ENCODE measurements at regions of chr9 and their contacts with region 1.

Region 1: GRCh38 chr9:125558453-125559092 is 148.4 kb downstream of the MAPKAP1 start:
- DNase-seq: peak; percentile 33
- ATAC-seq: peak; percentile 79
- H3K4me3 ChIP-seq: no peak overlapping the region
- H3K27ac ChIP-seq: no peak overlapping the region; the same call in 1 of the 2 replicates
- H3K4me1 ChIP-seq: peaks cover 28% of the 10 kb centered on the region
- H3K27me3 ChIP-seq: no peaks in the 10 kb centered on the region
- CTCF ChIP-seq: peak; percentile 79 to 90 (median 86)
- EP300 ChIP-seq: no peak
- POLR2A ChIP-seq: no peak
- RAD21 ChIP-seq: peak; percentile 91

Region 2: DNA sequence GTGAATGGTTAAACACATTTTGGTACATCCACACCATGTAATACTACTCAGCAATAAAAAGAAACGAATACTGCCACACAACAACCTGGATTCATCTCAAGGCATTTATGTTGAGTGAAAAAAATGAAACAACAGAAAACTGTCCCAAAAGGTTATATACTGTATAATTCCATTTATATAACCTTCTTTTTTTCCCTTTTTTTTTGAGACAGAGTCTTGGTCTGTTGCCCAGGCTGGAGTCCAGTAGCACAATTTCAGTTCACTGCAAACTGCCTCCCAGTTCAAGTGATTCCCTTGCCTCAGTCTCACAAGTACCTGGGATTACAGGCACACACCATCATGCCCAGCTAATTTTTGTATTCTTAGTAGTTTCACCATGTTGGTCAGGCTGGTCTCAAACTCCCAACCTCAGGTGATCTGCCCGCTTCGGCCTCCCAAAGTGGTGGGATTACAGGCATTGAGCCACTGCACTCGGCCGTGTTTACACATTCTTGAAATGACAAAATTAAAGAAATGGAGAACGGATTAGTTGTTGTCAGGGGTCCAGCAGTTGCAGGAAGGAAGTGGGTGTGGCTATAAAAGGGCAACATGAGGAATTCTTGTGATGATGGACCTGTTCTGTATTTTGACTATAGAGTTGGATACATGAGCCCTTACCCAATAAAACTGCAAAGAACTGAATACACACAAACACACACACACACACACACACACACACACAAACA is 386.4 kb before region 1 on chr9:
- CTCF ChIA-PET with region 1: no interaction called
- POLR2A ChIA-PET with region 1: no interaction called
- RAD21 ChIA-PET with region 1: no interaction called
- SMC1A ChIA-PET with region 1: no interaction called
- in situ Hi-C with region 1: no loop called
- intact Hi-C with region 1: no loop called
- DNase-seq: no peak
- ATAC-seq: no peak
- H3K4me3 ChIP-seq: no peak overlapping the region
- H3K27ac ChIP-seq: no peak overlapping the region
- H3K4me1 ChIP-seq: no peaks in the 10 kb centered on the region
- H3K27me3 ChIP-seq: no peaks in the 10 kb centered on the region
- CTCF ChIP-seq: no peak
- EP300 ChIP-seq: no peak
- POLR2A ChIP-seq: no peak
- RAD21 ChIP-seq: no peak

Region 3: DNA sequence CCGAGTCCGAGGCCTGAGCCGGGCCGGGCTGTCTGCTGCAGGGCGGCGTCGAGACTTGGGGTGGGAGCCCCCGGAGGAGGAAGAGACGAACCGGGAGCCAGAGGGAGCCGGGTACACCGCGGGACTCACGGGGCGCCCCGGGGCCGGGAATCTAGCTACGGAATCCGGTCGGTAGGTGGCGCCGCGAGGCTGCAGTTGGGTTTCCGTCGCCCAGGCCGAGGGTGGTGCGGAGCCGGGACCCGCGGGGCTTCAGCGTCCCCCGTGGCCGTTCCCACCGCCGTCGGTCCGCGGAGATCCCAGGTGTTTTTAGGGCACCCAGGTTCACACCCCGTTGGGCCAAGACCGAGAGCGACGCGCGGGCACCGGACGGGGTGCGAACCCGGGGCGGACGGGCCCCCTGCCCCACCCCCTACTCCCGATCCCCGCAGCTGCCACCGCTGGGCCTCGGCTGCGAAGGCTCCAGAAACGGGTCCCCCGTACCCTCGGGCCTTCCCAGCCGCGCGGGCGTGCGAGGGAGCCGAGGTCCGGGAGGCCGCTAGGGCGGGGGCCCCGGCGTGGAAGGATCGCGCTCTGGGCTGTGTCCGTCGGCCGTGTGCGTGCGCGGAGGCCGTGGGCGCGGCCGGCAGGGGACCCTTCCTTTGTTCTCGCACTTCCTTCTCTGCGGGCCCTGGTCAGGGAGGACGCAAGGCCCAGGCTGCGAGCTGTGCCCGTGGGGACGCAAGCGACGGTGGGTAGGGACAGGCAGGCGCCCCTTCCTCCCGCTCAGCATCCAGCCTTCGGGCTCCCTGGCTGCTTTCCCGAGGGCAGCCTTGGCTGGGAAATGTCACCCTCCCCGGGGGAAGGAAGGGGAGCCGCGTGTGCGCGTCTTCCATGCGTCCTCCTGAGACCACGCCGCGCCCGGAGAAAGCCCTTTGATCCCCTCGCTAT is 150.3 kb before region 1 on chr9:
- CTCF ChIA-PET with region 1: interaction called, 23 read pairs
- POLR2A ChIA-PET with region 1: interaction called, 3 read pairs
- RAD21 ChIA-PET with region 1: interaction called, 10 read pairs
- SMC1A ChIA-PET with region 1: interaction called, 5 read pairs
- in situ Hi-C with region 1: no loop called
- intact Hi-C with region 1: no loop called
- DNase-seq: no peak
- ATAC-seq: peak; percentile 93
- H3K4me3 ChIP-seq: peak overlapping the region; percentile 70; the same call in 1 of the 2 replicates
- H3K27ac ChIP-seq: no peak overlapping the region
- H3K4me1 ChIP-seq: peaks cover 10% of the 10 kb centered on the region
- H3K27me3 ChIP-seq: no peaks in the 10 kb centered on the region
- CTCF ChIP-seq: peak; percentile 75 to 95 (median 87); a peak in 5 of 6 replicates
- EP300 ChIP-seq: no peak
- POLR2A ChIP-seq: peak; percentile 27; the same call in 1 of the 2 replicates
- RAD21 ChIP-seq: peak; percentile 87

Region 4: GRCh38 chr9:125568621-125569020 is 10.0 kb after region 1 on chr9:
- CTCF ChIA-PET with region 1: interaction called, 16 read pairs
- POLR2A ChIA-PET with region 1: interaction called, 3 read pairs
- RAD21 ChIA-PET with region 1: interaction called, 3 read pairs
- SMC1A ChIA-PET with region 1: interaction called, 13 read pairs
- in situ Hi-C with region 1: no loop called
- intact Hi-C with region 1: no loop called
- DNase-seq: no peak
- ATAC-seq: no peak
- H3K4me3 ChIP-seq: no peak overlapping the region
- H3K27ac ChIP-seq: no peak overlapping the region
- H3K4me1 ChIP-seq: no peaks in the 10 kb centered on the region
- H3K27me3 ChIP-seq: no peaks in the 10 kb centered on the region
- CTCF ChIP-seq: no peak
- EP300 ChIP-seq: no peak
- POLR2A ChIP-seq: no peak
- RAD21 ChIP-seq: no peak

Region 5: GRCh38 chr9:125617087-125617486 is 58.5 kb after region 1 on chr9:
- CTCF ChIA-PET with region 1: interaction called, 21 read pairs
- POLR2A ChIA-PET with region 1: no interaction called
- RAD21 ChIA-PET with region 1: interaction called, 12 read pairs
- SMC1A ChIA-PET with region 1: interaction called, 5 read pairs
- in situ Hi-C with region 1: no loop called
- intact Hi-C with region 1: no loop called
- DNase-seq: no peak
- ATAC-seq: no peak
- H3K4me3 ChIP-seq: no peak overlapping the region
- H3K27ac ChIP-seq: no peak overlapping the region
- H3K4me1 ChIP-seq: no peaks in the 10 kb centered on the region
- H3K27me3 ChIP-seq: no peaks in the 10 kb centered on the region
- CTCF ChIP-seq: no peak
- EP300 ChIP-seq: no peak
- POLR2A ChIP-seq: no peak
- RAD21 ChIP-seq: no peak

Region 6: GRCh38 chr9:125700791-125701190 is 142.2 kb after region 1 on chr9:
- CTCF ChIA-PET with region 1: interaction called, 11 read pairs
- POLR2A ChIA-PET with region 1: interaction called, 7 read pairs
- RAD21 ChIA-PET with region 1: interaction called, 17 read pairs
- SMC1A ChIA-PET with region 1: interaction called, 12 read pairs
- in situ Hi-C with region 1: no loop called
- intact Hi-C with region 1: loop called (anchors 5 kb)
- DNase-seq: peak; percentile 84
- ATAC-seq: peak; percentile 89
- H3K4me3 ChIP-seq: peak overlapping the region; percentile 46; the same call in 1 of the 2 replicates
- H3K27ac ChIP-seq: peak overlapping the region; percentile 68
- H3K4me1 ChIP-seq: peaks cover 22% of the 10 kb centered on the region
- H3K27me3 ChIP-seq: no peaks in the 10 kb centered on the region
- CTCF ChIP-seq: no peak
- EP300 ChIP-seq: peak; percentile 81 to 82; a peak in 2 of 4 replicates
- POLR2A ChIP-seq: no peak
- RAD21 ChIP-seq: no peak; the same call in 1 of the 2 replicates

Region 7: DNA sequence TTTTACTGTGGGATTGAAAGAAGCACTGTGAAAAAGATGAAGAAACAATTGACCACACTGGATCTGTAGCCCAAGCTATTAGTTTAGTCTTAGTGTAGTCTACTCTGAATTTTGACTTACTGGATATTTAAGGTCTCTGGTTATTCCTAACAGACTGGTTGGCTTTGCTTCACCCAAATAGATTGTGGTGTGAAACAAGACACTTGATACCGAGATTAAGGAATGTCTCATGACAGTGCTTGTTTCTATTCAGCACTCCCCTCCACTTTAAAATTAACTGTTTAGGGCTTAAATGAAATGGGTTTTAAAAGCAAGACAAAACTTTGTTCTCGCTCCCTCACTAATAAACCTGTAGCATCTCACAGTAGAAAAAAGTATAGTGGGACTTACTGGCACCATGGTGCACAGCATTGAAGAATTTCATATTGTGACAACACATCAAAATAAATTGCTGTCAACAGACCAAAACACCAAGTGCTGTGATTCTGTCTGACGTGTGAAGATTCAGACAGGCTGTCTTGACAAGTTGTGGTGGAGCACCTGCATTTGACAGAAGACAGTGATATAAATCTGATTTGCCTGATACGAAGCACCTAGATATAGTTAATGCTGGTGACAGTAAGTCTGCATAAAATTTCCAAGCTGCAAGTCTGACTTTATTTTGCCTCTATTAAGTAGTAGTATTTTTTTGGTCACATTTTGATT is 261.7 kb after region 1 on chr9:
- CTCF ChIA-PET with region 1: interaction called, 4 read pairs
- POLR2A ChIA-PET with region 1: no interaction called
- RAD21 ChIA-PET with region 1: interaction called, 10 read pairs
- SMC1A ChIA-PET with region 1: no interaction called
- in situ Hi-C with region 1: no loop called
- intact Hi-C with region 1: no loop called
- DNase-seq: no peak
- ATAC-seq: peak; percentile 41
- H3K4me3 ChIP-seq: peak overlapping the region; percentile 30; the same call in 1 of the 2 replicates
- H3K27ac ChIP-seq: peak overlapping the region; percentile 56; the same call in 1 of the 2 replicates
- H3K4me1 ChIP-seq: peaks cover 25% of the 10 kb centered on the region
- H3K27me3 ChIP-seq: no peaks in the 10 kb centered on the region
- CTCF ChIP-seq: no peak
- EP300 ChIP-seq: no peak
- POLR2A ChIP-seq: no peak
- RAD21 ChIP-seq: no peak

Region 8: GRCh38 chr9:126084008-126084407 is 525.4 kb after region 1 on chr9:
- CTCF ChIA-PET with region 1: no interaction called
- POLR2A ChIA-PET with region 1: no interaction called
- RAD21 ChIA-PET with region 1: no interaction called
- SMC1A ChIA-PET with region 1: no interaction called
- in situ Hi-C with region 1: no loop called
- intact Hi-C with region 1: no loop called
- DNase-seq: no peak
- ATAC-seq: no peak
- H3K4me3 ChIP-seq: no peak overlapping the region
- H3K27ac ChIP-seq: no peak overlapping the region
- H3K4me1 ChIP-seq: no peaks in the 10 kb centered on the region
- H3K27me3 ChIP-seq: peaks cover 0 to 2% of the 10 kb centered on the region in 2 experiments; a peak in 2 of 4 replicates
- CTCF ChIP-seq: no peak
- EP300 ChIP-seq: no peak
- POLR2A ChIP-seq: no peak
- RAD21 ChIP-seq: no peak

Region 9: DNA sequence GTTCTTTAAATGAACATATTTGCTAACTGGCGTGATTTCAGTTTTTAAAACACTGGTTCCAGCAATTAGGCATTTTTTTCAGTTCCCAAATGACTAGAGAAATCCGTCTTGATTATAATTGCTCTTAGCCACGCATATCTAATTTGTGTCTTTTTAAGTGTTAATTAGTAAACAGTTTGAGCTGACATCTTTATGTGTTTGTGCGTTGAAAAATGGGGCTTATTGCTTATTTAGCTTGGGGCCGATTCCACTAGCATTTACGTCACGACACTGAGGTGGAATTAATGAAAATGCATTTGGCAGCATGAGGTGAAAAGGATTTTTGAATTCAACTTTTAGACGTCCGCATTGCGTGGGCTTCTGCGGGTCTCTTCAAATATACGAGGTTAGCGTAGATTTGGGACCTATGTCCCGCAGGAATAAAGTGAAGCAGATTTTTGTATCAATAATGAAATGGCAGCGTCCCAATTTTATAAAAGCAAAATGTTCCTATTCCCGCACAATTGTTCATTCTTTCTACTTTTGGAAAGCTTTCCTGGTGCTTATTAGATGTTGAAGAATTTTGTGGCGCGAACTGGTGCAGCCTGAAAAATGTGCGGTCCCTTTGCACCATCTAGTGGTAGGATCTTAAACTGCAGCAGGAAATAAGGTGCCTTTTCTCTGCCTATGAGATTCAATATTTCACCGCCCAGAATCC is 932.4 kb after region 1 on chr9:
- CTCF ChIA-PET with region 1: interaction called, 11 read pairs
- POLR2A ChIA-PET with region 1: no interaction called
- RAD21 ChIA-PET with region 1: no interaction called
- SMC1A ChIA-PET with region 1: interaction called, 3 read pairs
- in situ Hi-C with region 1: no loop called
- intact Hi-C with region 1: no loop called
- DNase-seq: no peak
- ATAC-seq: peak; percentile 73
- H3K4me3 ChIP-seq: no peak overlapping the region
- H3K27ac ChIP-seq: no peak overlapping the region
- H3K4me1 ChIP-seq: no peaks in the 10 kb centered on the region
- H3K27me3 ChIP-seq: peaks cover 0 to 2% of the 10 kb centered on the region in 2 experiments; a peak in 3 of 4 replicates
- CTCF ChIP-seq: peak; percentile 81 to 91 (median 85)
- EP300 ChIP-seq: no peak
- POLR2A ChIP-seq: no peak
- RAD21 ChIP-seq: peak; percentile 96

Measured in GM12878 (cell line).